ENCODE measurements at regions of chr15 and their contacts with region 1.

Region 1: GRCh38 chr15:97259943-97260342 is 700.6 kb upstream of the ARRDC4 start:
- DNase-seq: no peak
- ATAC-seq: no peak
- H3K4me3 ChIP-seq: no peak overlapping the region
- H3K27ac ChIP-seq: no peak overlapping the region
- H3K4me1 ChIP-seq: no peaks in the 10 kb centered on the region
- H3K27me3 ChIP-seq: no peaks in the 10 kb centered on the region
- CTCF ChIP-seq: no peak

Region 2: DNA sequence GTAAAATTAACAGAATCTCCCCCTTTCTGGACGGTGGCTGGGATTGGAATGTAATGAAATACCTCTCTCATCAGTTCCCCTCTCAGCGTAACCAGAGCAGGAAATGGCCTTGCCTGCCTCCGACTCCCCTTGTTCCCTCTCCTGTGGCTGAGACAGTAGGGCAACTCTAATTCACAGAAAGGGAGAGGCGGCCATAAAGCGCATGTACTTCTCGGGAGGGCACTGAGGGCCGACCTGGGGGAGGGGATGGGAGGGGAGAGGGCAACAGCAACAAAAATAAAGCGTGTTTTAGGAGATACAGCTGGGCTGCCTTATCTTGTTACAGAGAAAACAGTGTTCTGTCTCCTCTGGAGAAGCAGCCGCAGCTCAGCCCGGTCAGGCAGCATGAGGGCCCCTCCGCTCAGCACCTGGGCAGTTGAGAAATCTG is 82.8 kb before region 1 on chr15:
- intact Hi-C with region 1: no loop called
- DNase-seq: no peak
- ATAC-seq: no peak
- H3K4me3 ChIP-seq: no peak overlapping the region
- H3K27ac ChIP-seq: no peak overlapping the region
- H3K4me1 ChIP-seq: no peaks in the 10 kb centered on the region
- H3K27me3 ChIP-seq: no peaks in the 10 kb centered on the region
- CTCF ChIP-seq: no peak

Region 3: DNA sequence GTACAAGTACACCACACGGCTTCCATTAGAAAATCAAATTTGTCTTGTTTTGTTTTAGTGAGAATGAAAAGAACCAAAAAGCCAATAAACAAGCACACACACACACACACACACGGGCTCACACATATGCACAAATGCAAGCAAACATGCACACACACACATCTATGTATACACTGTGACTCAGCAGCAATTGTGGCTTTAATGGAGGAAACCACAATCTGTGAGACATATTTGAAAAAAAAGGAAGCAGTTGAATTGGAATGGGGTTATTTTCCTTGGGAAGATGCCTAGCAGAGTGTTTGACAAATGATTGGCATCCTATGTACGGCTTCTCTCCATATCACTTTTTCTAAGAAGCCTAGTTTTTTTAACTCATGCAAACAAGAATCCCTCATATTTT is 499.4 kb after region 1 on chr15:
- intact Hi-C with region 1: loop called in 1 of 2 experiments (anchors 10 kb)
- DNase-seq: no peak
- ATAC-seq: no peak
- H3K4me3 ChIP-seq: no peak overlapping the region
- H3K27ac ChIP-seq: no peak overlapping the region
- H3K4me1 ChIP-seq: no peaks in the 10 kb centered on the region
- H3K27me3 ChIP-seq: peaks cover 0 to 2% (median 0%) of the 10 kb centered on the region in 3 donors
- CTCF ChIP-seq: no peak

Measured in psoas muscle (tissue), 8 donors.